ENCODE measurements at regions of chr14 and their contacts with region 1.

Region 1: DNA sequence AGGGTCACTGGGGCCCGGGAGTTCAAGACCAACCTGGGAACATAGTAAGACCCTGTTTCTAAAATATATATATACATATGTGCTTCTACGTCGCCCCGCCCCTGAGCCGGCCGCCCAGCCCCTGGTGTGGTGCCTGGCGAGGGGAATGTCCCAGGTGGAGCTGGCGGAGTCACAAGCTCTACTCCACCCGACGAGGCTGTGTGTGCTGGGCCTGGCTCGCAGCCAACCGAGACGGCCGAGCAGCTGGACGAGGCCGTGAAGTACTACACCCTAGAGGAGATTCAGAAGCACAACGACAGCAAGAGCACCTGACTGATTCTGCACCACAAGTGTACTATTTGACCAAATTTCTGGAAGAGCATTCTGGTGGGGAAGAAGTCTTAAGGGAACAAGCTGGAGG is 22.1 kb upstream of the ITPK1 start:
- DNase-seq: no peak
- H3K4me3 ChIP-seq: no peak overlapping the region
- H3K4me3 Mint-ChIP-seq: no peak overlapping the region
- H3K27ac Mint-ChIP-seq: no peak overlapping the region
- H3K4me1 ChIP-seq: no peaks in the 10 kb centered on the region
- H3K4me1 Mint-ChIP-seq: peaks cover 6% of the 10 kb centered on the region
- H3K27me3 ChIP-seq: no peaks in the 10 kb centered on the region
- H3K27me3 Mint-ChIP-seq: no peaks in the 10 kb centered on the region
- CTCF ChIP-seq: no peak

Region 2: GRCh38 chr14:92409043-92409442 is 728.8 kb before region 1 on chr14:
- CTCF ChIA-PET with region 1: no interaction called
- POLR2A ChIA-PET with region 1: no interaction called
- intact Hi-C with region 1: no loop called
- DNase-seq: no peak
- H3K4me3 ChIP-seq: no peak overlapping the region
- H3K4me3 Mint-ChIP-seq: no peak overlapping the region
- H3K27ac Mint-ChIP-seq: no peak overlapping the region
- H3K4me1 ChIP-seq: no peaks in the 10 kb centered on the region
- H3K4me1 Mint-ChIP-seq: peaks cover 5% of the 10 kb centered on the region
- H3K27me3 ChIP-seq: no peaks in the 10 kb centered on the region; the same call in 1 of the 2 replicates
- H3K27me3 Mint-ChIP-seq: peaks cover 15% of the 10 kb centered on the region
- CTCF ChIP-seq: no peak

Region 3: DNA sequence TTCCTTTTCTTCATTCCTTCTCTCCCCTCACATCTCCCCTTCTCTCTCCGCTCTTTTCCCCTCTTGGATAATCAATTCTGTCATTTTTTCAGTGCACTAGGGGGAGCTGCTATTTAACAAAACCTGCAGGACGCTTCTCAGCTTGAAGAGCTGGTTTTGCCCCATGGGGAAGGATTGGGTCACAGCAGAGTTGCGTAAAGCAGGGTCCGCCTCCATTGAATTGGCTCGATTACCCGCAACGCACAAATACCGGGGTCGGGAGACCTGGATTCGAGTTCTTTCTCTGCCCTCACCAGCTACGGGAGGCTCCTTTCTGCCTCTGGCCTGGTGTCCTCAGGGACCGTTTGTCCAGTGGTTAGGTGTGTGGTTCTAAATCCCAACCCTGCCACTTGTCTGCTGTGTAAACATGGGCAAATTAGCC is 257.0 kb before region 1 on chr14:
- CTCF ChIA-PET with region 1: interaction called, 5 read pairs
- POLR2A ChIA-PET with region 1: no interaction called
- intact Hi-C with region 1: loop called (anchors 1 kb)
- DNase-seq: peak; percentile 49 to 61
- H3K4me3 ChIP-seq: no peak overlapping the region
- H3K4me3 Mint-ChIP-seq: no peak overlapping the region
- H3K27ac Mint-ChIP-seq: no peak overlapping the region
- H3K4me1 ChIP-seq: no peaks in the 10 kb centered on the region
- H3K4me1 Mint-ChIP-seq: no peaks in the 10 kb centered on the region
- H3K27me3 ChIP-seq: no peaks in the 10 kb centered on the region; the same call in 1 of the 2 replicates
- H3K27me3 Mint-ChIP-seq: peaks cover 28% of the 10 kb centered on the region
- CTCF ChIP-seq: peak; percentile 40 to 43

Region 4: GRCh38 chr14:93105362-93105761 is 32.5 kb before region 1 on chr14:
- CTCF ChIA-PET with region 1: no interaction called
- POLR2A ChIA-PET with region 1: no interaction called
- intact Hi-C with region 1: no loop called
- DNase-seq: no peak
- H3K4me3 ChIP-seq: no peak overlapping the region
- H3K4me3 Mint-ChIP-seq: no peak overlapping the region
- H3K27ac Mint-ChIP-seq: no peak overlapping the region
- H3K4me1 ChIP-seq: peaks cover 11% of the 10 kb centered on the region; the same call in 1 of the 2 replicates
- H3K4me1 Mint-ChIP-seq: no peaks in the 10 kb centered on the region
- H3K27me3 ChIP-seq: no peaks in the 10 kb centered on the region
- H3K27me3 Mint-ChIP-seq: no peaks in the 10 kb centered on the region
- CTCF ChIP-seq: no peak

Measured in Caco-2 (cell line).